Natural killer cell (primary cell): ENCODE measurements at regions of chr5 and their contacts with region 1.

Region 1: GRCh38 chr5:123371575-123372179 is 51.5 kb downstream of the CEP120 start:
- DNase-seq: peak; percentile 21 to 49
- ATAC-seq: no peak
- H3K4me3 ChIP-seq: no peak overlapping the region
- H3K4me3 Mint-ChIP-seq: no peak overlapping the region
- H3K27ac ChIP-seq: no peak overlapping the region
- H3K27ac Mint-ChIP-seq: no peak overlapping the region
- H3K4me1 ChIP-seq: no peaks in the 10 kb centered on the region
- H3K4me1 Mint-ChIP-seq: peaks cover 6 to 14% of the 10 kb centered on the region in 2 donors
- H3K27me3 ChIP-seq: no peaks in the 10 kb centered on the region
- H3K27me3 Mint-ChIP-seq: no peaks in the 10 kb centered on the region
- CTCF ChIP-seq: peak; percentile 46

Region 2: DNA sequence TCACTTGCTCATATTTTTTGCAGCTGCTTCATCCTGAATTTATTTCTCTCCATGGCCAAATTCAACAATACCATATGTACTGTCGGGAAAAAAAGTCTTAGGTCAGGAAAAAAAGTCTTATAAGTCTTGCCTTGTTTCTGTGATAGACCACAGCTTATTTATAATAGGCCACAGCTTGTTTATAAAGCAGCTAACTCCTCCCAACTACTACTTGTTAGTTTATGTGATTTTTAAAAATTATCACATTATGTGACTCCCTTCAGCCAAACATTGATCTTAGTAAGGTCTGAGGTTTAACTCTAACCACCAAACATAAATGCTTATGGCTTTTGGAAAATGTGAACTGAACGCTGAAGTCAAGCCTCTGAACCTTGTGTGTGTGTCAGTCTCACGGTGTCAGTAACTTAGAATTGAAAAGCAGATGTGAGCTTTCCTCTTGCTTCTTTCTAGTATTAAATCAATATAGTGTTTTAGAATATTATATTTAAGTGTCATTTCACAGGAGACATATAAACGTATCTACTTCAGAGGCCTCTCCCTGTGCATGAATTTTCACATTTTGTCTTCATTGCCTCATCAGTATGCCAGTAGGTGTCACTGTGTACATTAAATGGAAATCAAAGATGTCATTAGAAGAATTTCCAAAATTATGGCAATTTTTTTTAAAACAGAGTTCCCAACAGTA is 474.9 kb before region 1 on chr5:
- intact Hi-C with region 1: loop called (anchors 5 kb)
- DNase-seq: peak in 1 of 2 donors; percentile 12
- ATAC-seq: no peak
- H3K4me3 ChIP-seq: no peak overlapping the region
- H3K4me3 Mint-ChIP-seq: no peak overlapping the region
- H3K27ac ChIP-seq: no peak overlapping the region
- H3K27ac Mint-ChIP-seq: no peak overlapping the region
- H3K4me1 ChIP-seq: peaks cover 3% of the 10 kb centered on the region
- H3K4me1 Mint-ChIP-seq: peaks cover 4% of the 10 kb centered on the region in 2 donors
- H3K27me3 ChIP-seq: no peaks in the 10 kb centered on the region
- H3K27me3 Mint-ChIP-seq: no peaks in the 10 kb centered on the region
- CTCF ChIP-seq: no peak

Region 3: GRCh38 chr5:123610665-123611405 is 239.2 kb after region 1 on chr5:
- intact Hi-C with region 1: loop called (anchors 5 kb)
- DNase-seq: peak in 1 of 2 donors; percentile 82
- ATAC-seq: peak; percentile 81 to 88 (median 84)
- H3K4me3 ChIP-seq: no peak overlapping the region
- H3K4me3 Mint-ChIP-seq: no peak overlapping the region
- H3K27ac ChIP-seq: no peak overlapping the region
- H3K27ac Mint-ChIP-seq: peak overlapping the region; percentile 37 to 61
- H3K4me1 ChIP-seq: no peaks in the 10 kb centered on the region
- H3K4me1 Mint-ChIP-seq: no peaks in the 10 kb centered on the region
- H3K27me3 ChIP-seq: no peaks in the 10 kb centered on the region
- H3K27me3 Mint-ChIP-seq: no peaks in the 10 kb centered on the region
- CTCF ChIP-seq: peak; percentile 100